ENCODE measurements at regions of chr13 and their contacts with region 1.

Region 1: DNA sequence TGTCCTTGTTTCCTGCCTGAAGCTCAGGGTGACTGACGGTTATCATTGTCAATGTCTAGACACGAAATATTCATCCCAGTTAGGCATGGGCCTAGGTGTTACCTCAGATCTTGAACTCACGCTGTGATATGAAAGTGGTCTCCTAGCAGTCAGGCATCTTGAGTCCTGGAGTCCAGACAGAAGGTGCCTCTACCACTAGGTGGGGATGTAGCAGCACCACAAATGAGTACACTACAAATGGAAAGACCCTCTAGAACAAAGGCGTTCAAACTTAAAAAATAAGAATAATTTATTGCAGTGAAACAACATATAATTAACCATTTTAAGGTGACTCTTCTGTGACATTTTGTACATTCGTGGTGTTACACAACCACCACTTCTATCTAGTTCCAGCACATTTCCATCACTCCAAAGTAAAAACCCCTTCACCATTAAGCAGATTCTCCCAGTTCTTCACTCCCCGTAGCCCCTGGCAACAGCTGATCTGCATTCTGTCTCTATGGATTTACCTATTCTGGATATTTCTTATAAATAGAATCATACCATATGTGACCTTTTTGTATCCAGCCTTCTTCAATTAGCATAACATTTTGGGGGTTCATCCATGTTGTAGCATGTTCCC is 11.9 kb upstream of the FRY start:
- DNase-seq: peak; percentile 25
- H3K4me3 ChIP-seq: no peak overlapping the region
- H3K27ac ChIP-seq: no peak overlapping the region
- H3K4me1 ChIP-seq: no peaks in the 10 kb centered on the region
- H3K27me3 ChIP-seq: no peaks in the 10 kb centered on the region
- CTCF ChIP-seq: peak; percentile 52 to 67 (median 62)
- EP300 ChIP-seq: no peak
- POLR2A ChIP-seq: no peak

Region 2: DNA sequence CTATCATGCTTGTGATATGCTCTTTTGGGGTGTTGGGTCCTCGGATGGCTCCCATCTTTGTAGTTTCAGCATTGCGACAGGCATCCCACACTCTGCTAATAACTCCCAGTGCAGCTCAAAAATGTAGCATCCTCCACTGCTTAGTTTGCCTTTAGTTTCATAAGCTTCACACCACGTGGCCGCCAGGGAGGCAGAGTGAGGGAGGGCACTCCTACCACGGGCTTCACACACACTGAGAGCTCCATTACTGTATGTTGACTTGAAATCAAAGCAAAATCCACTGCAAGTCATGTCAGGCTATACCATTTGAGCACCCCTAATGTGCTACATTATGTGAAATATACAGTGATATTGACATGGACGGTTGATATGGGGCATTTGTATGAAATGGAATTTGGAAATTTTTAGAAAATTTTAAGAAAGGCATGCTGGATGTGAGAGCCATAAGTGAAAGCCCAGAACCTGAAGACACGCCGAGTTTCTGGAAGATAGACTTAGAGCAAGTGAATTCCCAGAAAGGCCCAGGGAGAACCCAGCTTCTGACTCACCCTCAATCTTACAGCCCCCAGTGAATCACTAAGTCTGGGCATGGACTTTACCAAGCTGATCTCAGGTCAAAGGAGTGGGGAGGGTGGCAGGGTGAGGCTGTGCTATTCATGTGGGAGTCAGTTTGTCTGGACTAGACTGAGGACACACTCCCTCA is 952.2 kb before region 1 on chr13:
- in situ Hi-C with region 1: no loop called
- intact Hi-C with region 1: no loop called
- DNase-seq: no peak
- H3K4me3 ChIP-seq: no peak overlapping the region
- H3K27ac ChIP-seq: no peak overlapping the region
- H3K4me1 ChIP-seq: no peaks in the 10 kb centered on the region
- H3K27me3 ChIP-seq: no peaks in the 10 kb centered on the region
- CTCF ChIP-seq: no peak
- EP300 ChIP-seq: no peak
- POLR2A ChIP-seq: no peak

Region 3: GRCh38 chr13:32164622-32165268 is 145.0 kb after region 1 on chr13:
- in situ Hi-C with region 1: no loop called
- intact Hi-C with region 1: loop called (anchors 10 kb)
- DNase-seq: no peak
- H3K4me3 ChIP-seq: no peak overlapping the region
- H3K27ac ChIP-seq: no peak overlapping the region
- H3K4me1 ChIP-seq: no peaks in the 10 kb centered on the region
- H3K27me3 ChIP-seq: no peaks in the 10 kb centered on the region
- CTCF ChIP-seq: peak; percentile 34 to 54 (median 39)
- EP300 ChIP-seq: no peak
- POLR2A ChIP-seq: no peak

Region 4: GRCh38 chr13:32310134-32310706 is 290.5 kb after region 1 on chr13:
- in situ Hi-C with region 1: loop called in 3 of 4 experiments (anchors 10 to 25 kb)
- intact Hi-C with region 1: no loop called
- DNase-seq: no peak
- H3K4me3 ChIP-seq: peak overlapping the region in 2 of 4 donors; percentile 2 to 40
- H3K27ac ChIP-seq: peak overlapping the region in 3 of 4 donors; percentile 23 to 43 (median 35)
- H3K4me1 ChIP-seq: peaks cover 0 to 15% (median 8%) of the 10 kb centered on the region in 4 donors
- H3K27me3 ChIP-seq: no peaks in the 10 kb centered on the region
- CTCF ChIP-seq: peak; percentile 69 to 88 (median 72)
- EP300 ChIP-seq: no peak
- POLR2A ChIP-seq: no peak

Region 5: GRCh38 chr13:32315238-32316027 is 295.7 kb after region 1 on chr13 and contains the starts of genes BRCA2 and ZAR1L:
- in situ Hi-C with region 1: loop called in 1 of 4 experiments (anchors 25 kb)
- intact Hi-C with region 1: no loop called
- DNase-seq: peak; percentile 91
- H3K4me3 ChIP-seq: peak within 1 kb of the TSS; percentile 63 to 86 (median 78)
- H3K27ac ChIP-seq: peak within 1 kb of the TSS; percentile 88 to 95 (median 92)
- H3K4me1 ChIP-seq: peaks cover 3 to 13% (median 8%) of the 10 kb centered on the region in 4 donors
- H3K27me3 ChIP-seq: no peaks in the 10 kb centered on the region
- CTCF ChIP-seq: no peak
- EP300 ChIP-seq: no peak
- POLR2A ChIP-seq: peak; percentile 79
- total RNA-seq, gene BRCA2: 1.6 to 4.8 (median 2.4) TPM in 3 of 4 donors, not detected in the other
- total RNA-seq, gene ZAR1L: not detected